SK-MEL-5 (cell line): ENCODE measurements at regions of chr15 and their contacts with region 1.

Region 1: GRCh38 chr15:81176291-81176893 is 20.3 kb upstream of the IL16 start:
- DNase-seq: peak; percentile 81

Region 2: GRCh38 chr15:81239190-81239589 is 62.8 kb after region 1 on chr15:
- in situ Hi-C with region 1: loop called (anchors 10 kb)
- DNase-seq: peak; percentile 44

Region 3: DNA sequence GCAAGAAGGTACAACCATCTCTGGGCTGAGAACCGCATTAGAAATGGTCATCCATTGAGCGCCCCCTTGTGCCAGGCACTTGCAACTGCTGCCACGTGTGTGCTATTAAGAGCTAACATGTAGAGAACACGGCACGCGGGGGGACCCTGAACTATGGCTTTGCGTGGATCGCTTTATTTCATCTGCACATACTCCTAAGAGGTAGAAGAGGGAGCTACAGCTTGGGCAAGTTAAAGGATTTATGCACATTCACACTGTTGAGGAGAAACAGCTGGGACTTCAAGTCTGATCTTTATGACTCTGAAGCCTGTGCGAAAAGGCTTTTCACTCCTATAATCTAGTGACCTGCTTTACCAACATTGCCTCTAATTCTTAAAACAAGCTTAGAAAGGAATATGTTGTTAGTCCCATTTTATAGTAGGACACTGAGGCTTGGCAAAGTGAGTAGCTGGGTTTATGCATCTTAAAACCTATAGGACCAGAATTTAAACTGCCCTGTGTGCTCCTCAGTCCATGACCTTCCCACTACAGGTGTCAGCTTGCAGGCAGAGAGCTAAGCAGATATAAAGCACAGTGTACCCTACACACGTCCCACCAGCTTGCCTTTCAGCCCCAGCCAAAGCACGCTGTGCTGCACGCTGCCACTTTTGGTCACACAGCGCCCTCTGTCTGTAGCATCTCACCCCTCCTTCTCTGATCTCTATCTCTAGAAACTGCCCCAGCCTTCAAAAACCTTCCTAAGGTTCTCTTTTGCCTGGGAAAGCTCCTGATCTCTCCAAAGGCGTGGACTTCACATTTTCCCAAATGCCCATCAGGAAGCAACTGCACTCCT is 89.8 kb after region 1 on chr15:
- in situ Hi-C with region 1: loop called (anchors 10 kb)
- DNase-seq: peak; percentile 88